ENCODE measurements at regions of chr6 and their contacts with region 1.

Region 1: DNA sequence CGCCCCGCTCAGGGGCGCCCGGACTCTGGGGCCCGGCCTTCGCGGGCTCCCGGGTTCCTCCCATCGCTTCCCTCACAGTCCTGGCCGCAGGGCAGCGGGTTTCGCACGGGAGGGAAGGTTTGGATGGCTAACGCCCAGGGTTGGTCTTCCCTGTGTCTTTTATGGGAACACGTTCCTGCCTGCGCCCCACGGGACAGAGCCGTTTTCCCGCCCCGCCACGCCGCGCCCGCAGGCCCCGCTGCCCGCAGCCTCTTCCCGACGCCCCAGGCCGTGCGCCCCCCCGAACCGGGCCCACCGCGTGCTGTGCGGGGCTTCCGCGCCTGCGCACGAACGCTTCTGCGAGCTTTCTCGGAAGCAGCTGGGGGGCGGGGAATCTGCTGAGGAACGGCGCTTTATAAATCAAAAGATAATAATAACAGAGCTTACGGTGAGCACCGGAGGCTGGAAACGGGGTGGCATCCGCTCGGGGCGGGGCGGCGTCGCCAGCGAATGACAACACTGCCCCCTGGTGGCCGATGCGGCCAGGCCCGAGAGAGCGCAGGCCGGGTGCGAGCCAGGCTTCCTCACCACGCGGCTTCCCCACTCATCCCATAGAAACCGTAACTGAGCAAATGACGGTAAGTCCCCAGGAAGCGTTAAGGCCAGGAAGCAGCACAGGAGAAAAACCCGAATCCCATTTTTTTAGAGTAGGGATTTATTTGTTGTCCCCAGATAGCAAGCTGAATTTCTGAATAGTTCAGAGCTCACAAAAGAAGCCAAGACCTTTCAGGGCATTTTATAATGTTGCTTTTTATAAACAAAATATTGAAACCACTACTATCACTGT is 116.4 kb downstream of the MYLK4 start:
- DNase-seq: peak; percentile 75
- ATAC-seq: peak; percentile 80
- H3K4me3 ChIP-seq: peak overlapping the region; percentile 37 to 52
- H3K27ac ChIP-seq: peak overlapping the region; percentile 73
- H3K4me1 ChIP-seq: peaks cover 46 to 61% of the 10 kb centered on the region in 2 experiments
- H3K27me3 ChIP-seq: no peaks in the 10 kb centered on the region
- CTCF ChIP-seq: peak in 2 of 3 experiments; percentile 95 to 96; a peak in 4 of 6 replicates
- POLR2A ChIP-seq: no peak
- RAD21 ChIP-seq: no peak

Region 2: DNA sequence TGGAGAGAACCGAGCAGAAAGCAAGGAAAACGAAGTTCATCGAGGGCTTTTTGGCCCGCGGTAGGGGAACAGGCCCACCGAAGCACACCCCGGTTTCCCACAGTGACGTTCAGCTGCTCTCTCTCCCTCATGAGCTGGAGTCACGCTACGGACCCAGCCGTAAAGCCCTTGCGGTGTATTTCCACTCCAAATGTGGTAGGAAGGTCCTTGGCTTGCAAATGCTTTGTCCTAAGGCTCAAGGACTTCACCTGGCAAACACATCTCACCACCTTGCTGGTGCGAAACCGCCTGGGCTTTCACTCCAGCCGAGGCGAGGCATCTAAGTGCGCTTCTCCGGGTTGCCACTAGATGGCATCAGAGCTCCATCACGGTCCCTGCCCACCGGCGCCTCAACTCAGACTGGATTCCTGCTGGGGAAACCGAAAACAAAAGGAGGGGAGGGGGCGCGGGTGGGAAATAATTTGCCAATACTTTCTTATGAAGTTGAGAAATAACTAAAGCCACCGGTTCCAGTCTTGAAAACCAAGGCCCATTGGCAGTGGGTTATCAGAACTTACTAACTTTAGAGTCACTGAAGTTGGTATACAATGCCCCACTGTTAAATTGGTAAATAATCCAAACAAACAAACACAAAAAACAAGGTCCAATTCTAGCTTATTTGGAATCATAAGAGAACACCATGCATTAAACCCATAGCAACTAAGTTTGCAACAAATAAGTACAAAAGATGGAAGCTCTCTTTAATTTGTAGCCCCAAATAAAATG is 1038.1 kb before region 1 on chr6:
- CTCF ChIA-PET with region 1: interaction called, 9 read pairs
- POLR2A ChIA-PET with region 1: no interaction called
- RAD21 ChIA-PET with region 1: no interaction called
- intact Hi-C with region 1: loop called (anchors 1 kb)
- DNase-seq: no peak
- ATAC-seq: peak; percentile 95
- H3K4me3 ChIP-seq: no peak overlapping the region
- H3K27ac ChIP-seq: no peak overlapping the region
- H3K4me1 ChIP-seq: peaks cover 2 to 7% of the 10 kb centered on the region in 2 experiments; a peak in 2 of 4 replicates
- H3K27me3 ChIP-seq: no peaks in the 10 kb centered on the region
- CTCF ChIP-seq: peak; percentile 81 to 90 (median 89)
- POLR2A ChIP-seq: no peak
- RAD21 ChIP-seq: peak; percentile 95

Region 3: GRCh38 chr6:2103644-2104523 is 530.5 kb before region 1 on chr6:
- CTCF ChIA-PET with region 1: interaction called, 3 read pairs
- POLR2A ChIA-PET with region 1: no interaction called
- RAD21 ChIA-PET with region 1: no interaction called
- intact Hi-C with region 1: loop called (anchors 5 kb)
- DNase-seq: peak; percentile 19
- ATAC-seq: peak; percentile 70
- H3K4me3 ChIP-seq: no peak overlapping the region
- H3K27ac ChIP-seq: peak overlapping the region; percentile 29
- H3K4me1 ChIP-seq: peaks cover 6 to 9% of the 10 kb centered on the region in 2 experiments; a peak in 3 of 4 replicates
- H3K27me3 ChIP-seq: no peaks in the 10 kb centered on the region
- CTCF ChIP-seq: peak in 2 of 3 experiments; percentile 45 to 62; a peak in 4 of 6 replicates
- POLR2A ChIP-seq: no peak
- RAD21 ChIP-seq: peak; percentile 78

Region 4: DNA sequence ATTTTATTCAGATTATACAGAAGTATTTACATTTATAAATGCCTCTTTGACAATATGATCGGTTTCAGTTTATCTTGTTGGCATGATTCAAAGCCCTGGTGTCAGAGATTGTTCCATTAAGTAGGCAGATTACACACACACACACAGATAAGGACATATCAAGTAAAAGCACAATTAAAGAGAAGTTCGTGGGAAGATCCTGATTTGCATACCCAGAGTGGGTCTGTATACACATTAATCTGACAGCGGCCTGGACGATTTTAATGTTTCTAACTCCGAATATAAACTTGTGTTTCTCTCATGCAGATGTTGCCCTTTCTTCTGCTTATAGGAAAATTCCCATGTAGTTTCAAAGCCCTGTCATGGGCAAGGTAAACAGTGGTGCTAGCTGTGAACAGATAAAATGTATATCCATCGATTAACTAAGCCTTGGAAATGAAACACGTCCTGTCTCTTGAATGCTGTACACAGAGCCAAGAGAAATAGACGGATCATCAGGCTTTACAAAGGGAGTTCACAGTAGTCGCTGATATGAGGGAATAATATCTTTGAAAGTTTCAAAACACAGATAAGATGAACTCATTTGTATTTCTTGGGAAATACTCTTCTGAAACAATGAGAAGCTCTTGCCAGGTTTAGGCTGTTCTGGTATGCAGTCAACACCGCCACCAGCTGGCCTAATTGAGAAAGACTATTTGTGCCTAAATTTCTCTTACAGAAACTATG is 280.8 kb before region 1 on chr6:
- CTCF ChIA-PET with region 1: interaction called, 9 read pairs
- POLR2A ChIA-PET with region 1: no interaction called
- RAD21 ChIA-PET with region 1: no interaction called
- intact Hi-C with region 1: loop called (anchors 1 kb)
- DNase-seq: peak; percentile 48
- ATAC-seq: peak; percentile 84
- H3K4me3 ChIP-seq: no peak overlapping the region
- H3K27ac ChIP-seq: no peak overlapping the region
- H3K4me1 ChIP-seq: no peaks in the 10 kb centered on the region
- H3K27me3 ChIP-seq: no peaks in the 10 kb centered on the region
- CTCF ChIP-seq: peak; percentile 74 to 86 (median 81); a peak in 5 of 6 replicates
- POLR2A ChIP-seq: no peak
- RAD21 ChIP-seq: peak; percentile 93

Region 5: DNA sequence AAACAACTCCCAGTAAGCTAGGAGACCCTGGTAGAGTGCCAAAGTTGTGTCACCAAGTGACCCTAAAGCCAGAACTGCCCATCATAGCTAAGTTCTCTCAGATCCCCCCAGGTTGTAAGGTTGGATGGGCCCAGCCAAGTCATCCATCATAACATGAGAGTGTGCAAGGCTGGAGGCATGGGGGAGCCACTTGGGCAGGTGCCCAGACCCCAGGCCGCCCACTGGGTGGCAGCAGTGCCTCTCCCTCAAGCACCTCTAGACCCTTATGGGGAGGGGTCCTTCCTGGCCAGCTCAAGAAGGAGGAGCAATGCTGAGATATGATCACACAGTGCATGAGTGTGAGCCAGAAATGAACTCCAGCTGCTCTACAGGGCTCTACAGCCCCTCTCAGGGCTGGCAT is 38.1 kb before region 1 on chr6:
- CTCF ChIA-PET with region 1: interaction called, 4 read pairs
- POLR2A ChIA-PET with region 1: no interaction called
- RAD21 ChIA-PET with region 1: no interaction called
- intact Hi-C with region 1: loop called (anchors 1 kb)
- DNase-seq: no peak
- ATAC-seq: peak; percentile 63
- H3K4me3 ChIP-seq: no peak overlapping the region
- H3K27ac ChIP-seq: no peak overlapping the region
- H3K4me1 ChIP-seq: no peaks in the 10 kb centered on the region
- H3K27me3 ChIP-seq: no peaks in the 10 kb centered on the region
- CTCF ChIP-seq: peak; percentile 55 to 57 (median 57)
- POLR2A ChIP-seq: no peak
- RAD21 ChIP-seq: peak; percentile 73

Region 6: DNA sequence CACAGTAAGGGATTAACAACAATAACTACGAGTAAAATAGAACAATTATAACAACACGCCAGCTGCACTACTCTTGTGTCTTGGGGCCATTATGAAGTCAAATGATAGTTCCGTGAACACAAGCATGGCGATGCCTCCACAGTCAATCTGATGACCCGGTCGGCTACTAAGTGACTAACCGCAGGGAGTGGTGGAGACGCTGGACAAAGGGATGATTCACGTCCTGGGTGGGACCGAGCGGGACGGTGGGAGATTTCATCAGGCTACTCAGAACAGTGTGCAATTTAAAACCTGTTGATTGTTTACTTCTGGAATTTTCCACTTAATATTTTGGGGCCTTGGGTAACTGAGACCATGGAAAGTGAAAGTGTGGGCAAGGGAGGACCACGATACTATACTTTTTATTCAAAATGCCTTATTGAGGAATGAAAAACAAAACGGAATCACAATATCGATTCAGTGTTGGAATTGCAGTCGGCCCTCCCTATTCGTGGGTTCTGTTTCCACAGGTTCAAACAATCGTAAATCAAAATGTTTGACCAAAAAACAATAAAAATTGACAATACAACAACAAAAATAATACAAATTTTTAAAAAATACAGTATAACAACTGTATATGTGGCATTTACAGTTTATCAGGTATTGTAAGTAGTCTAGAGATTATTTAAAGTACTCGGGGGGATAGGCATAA is 49.9 kb after region 1 on chr6:
- CTCF ChIA-PET with region 1: no interaction called
- POLR2A ChIA-PET with region 1: interaction called, 4 read pairs
- RAD21 ChIA-PET with region 1: interaction called in 1 of 2 experiments, 3 read pairs
- intact Hi-C with region 1: loop called (anchors 1 kb)
- DNase-seq: peak; percentile 86
- ATAC-seq: peak; percentile 92
- H3K4me3 ChIP-seq: peak overlapping the region in 1 of 2 experiments; percentile 31; a peak in 1 of 4 replicates
- H3K27ac ChIP-seq: no peak overlapping the region
- H3K4me1 ChIP-seq: peaks cover 10 to 25% of the 10 kb centered on the region in 2 experiments
- H3K27me3 ChIP-seq: no peaks in the 10 kb centered on the region
- CTCF ChIP-seq: no peak
- POLR2A ChIP-seq: no peak
- RAD21 ChIP-seq: no peak

Region 7: DNA sequence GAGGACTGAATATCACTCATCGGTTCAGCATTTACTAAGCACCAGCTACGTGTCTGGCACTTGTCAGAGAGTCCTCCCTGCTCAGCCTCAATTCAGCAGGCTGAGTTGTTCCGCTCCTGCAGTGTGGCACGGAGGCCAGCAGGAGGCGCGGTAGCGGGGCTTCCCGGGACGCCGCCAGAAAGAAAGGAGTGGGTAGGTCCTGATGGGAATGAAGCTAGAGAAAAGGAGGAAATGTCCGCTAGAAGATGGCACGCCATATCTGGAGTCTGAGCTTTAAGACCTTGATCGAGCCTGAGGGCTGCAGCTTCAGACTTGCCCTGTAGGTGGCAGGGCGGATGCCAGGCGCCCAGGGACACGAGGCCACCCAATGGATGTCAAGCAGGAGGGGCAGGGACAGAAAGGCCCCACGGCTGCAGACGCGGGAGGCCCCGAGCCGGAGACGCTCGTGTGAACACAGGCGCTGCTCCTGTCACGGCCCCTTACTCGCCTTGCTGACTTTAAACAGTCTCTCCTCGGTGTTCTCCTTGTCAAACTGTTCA is 318.3 kb after region 1 on chr6:
- CTCF ChIA-PET with region 1: no interaction called
- POLR2A ChIA-PET with region 1: no interaction called
- RAD21 ChIA-PET with region 1: no interaction called
- intact Hi-C with region 1: no loop called
- DNase-seq: peak; percentile 91
- ATAC-seq: peak; percentile 96
- H3K4me3 ChIP-seq: no peak overlapping the region
- H3K27ac ChIP-seq: peak overlapping the region; percentile 12; the same call in 1 of the 2 replicates
- H3K4me1 ChIP-seq: peaks cover 10 to 18% of the 10 kb centered on the region in 2 experiments
- H3K27me3 ChIP-seq: no peaks in the 10 kb centered on the region
- CTCF ChIP-seq: peak; percentile 99 to 100 (median 99)
- POLR2A ChIP-seq: no peak
- RAD21 ChIP-seq: peak; percentile 83